Mammary epithelial cell (primary cell): ENCODE measurements at regions of chr2 and their contacts with region 1.

Region 1: GRCh38 chr2:65545837-65546805 is 113.7 kb upstream of the SPRED2 start:
- DNase-seq: peak; percentile 47
- H3K4me3 ChIP-seq: no peak overlapping the region
- H3K27ac ChIP-seq: no peak overlapping the region
- H3K4me1 ChIP-seq: peaks cover 12% of the 10 kb centered on the region
- H3K27me3 ChIP-seq: no peaks in the 10 kb centered on the region
- CTCF ChIP-seq: no peak

Region 2: GRCh38 chr2:65483763-65484162 is 62.4 kb before region 1 on chr2:
- CTCF ChIA-PET with region 1: no interaction called
- dilution Hi-C with region 1: loop called (anchors 10 kb)
- in situ Hi-C with region 1: no loop called
- intact Hi-C with region 1: no loop called
- DNase-seq: no peak
- H3K4me3 ChIP-seq: no peak overlapping the region
- H3K27ac ChIP-seq: no peak overlapping the region
- H3K4me1 ChIP-seq: no peaks in the 10 kb centered on the region
- H3K27me3 ChIP-seq: no peaks in the 10 kb centered on the region
- CTCF ChIP-seq: no peak